Activated CD4-positive, alpha-beta memory T cell treated with anti-CD3 and anti-CD28 coated beads for 36 hours (primary cell): ENCODE measurements at regions of chr13 and their contacts with region 1.

Region 1: DNA sequence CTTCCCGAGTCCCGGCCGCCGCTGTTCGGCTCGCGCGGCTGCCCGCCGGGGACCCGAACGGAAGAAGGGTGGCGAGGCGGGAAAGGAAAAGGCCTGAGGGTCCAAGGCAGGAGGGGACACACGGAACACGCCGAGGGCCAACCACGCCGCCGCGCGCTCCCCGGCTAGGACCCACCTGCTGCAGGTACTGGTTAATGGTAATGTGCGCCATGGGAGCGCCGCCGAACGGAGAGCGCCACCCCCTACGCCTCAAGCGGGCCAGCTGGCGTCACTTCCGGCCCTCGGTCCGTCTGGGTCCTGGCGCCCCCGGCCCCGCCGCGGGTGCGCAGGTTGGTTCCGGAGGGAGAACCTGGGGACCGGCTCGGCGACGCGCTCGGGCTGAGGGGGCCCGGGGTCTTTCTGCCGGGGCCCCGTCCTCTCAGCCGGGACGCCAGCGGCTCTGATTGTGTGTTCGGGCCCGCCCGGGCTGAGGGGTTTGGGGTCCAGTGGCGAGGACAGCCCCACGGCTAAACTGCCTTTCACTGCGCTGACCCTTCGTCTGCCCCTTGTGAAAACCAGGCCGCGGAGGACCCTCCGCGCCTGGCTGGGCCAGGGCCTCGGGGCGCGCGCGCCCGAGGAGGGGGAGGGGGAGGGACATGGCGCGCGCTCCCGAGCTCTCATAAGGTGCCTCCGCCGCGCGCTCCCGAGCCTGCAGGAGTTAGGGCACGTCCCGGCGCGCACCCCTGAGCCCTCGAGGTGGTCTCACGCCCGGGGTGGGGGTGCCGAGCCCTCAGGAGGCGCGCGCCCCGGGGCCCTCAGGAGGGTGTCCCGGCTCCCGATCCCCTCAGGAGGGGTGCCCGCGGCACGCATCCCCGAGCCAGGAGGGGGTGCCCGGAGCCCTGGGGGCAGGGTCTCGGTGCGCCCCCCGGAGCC is at the start of gene PCID2:
- DNase-seq: peak; percentile 92
- H3K4me3 Mint-ChIP-seq: peak within 1 kb of the TSS; percentile 83
- H3K27ac Mint-ChIP-seq: peak within 1 kb of the TSS; percentile 60
- H3K4me1 Mint-ChIP-seq: peaks cover 56% of the 10 kb centered on the region
- H3K27me3 Mint-ChIP-seq: no peaks in the 10 kb centered on the region
- total RNA-seq, gene PCID2: 66.6 to 72.4 TPM

Region 2: DNA sequence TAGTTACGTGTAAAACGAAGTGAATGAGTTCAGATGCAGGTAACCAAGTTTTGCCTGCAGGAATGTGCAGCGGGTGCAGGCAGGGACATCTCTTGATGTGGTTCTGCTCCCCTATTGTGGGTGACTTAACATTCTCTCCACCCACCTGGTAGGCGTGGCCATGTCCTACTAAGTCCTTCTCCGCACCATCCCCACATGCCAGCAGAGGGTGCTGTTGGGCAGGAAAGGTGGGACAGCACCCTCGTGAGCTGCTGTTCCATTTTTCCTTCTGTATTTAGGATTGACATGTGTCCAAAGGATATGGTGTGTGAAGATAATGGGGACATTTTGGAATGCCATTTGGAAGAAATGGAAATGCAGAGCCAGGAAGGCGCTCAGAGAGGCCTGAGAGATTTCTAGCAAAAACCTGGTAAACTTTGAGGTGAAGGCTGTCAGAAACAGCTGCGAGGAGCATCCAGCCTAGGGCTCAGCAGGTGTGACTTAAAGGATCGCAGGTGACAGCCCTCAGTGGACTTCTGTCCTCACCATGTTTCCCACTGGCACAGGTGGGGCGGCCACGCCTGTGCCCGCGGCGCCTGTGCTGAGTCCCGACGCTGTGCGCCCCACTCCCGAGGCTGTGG is 265.9 kb before region 1 on chr13:
- CTCF ChIA-PET with region 1: interaction called, 4 read pairs
- POLR2A ChIA-PET with region 1: no interaction called
- intact Hi-C with region 1: loop called (anchors 5 kb)
- DNase-seq: peak; percentile 97
- H3K4me3 Mint-ChIP-seq: peak overlapping the region; percentile 83
- H3K27ac Mint-ChIP-seq: no peak overlapping the region
- H3K4me1 Mint-ChIP-seq: peaks cover 6% of the 10 kb centered on the region
- H3K27me3 Mint-ChIP-seq: peaks cover 15% of the 10 kb centered on the region

Region 3: GRCh38 chr13:113187263-113187669 is 21.4 kb before region 1 on chr13:
- CTCF ChIA-PET with region 1: interaction called, 5 read pairs
- POLR2A ChIA-PET with region 1: interaction called, 4 read pairs
- intact Hi-C with region 1: loop called (anchors 2 kb)
- DNase-seq: peak; percentile 84
- H3K4me3 Mint-ChIP-seq: peak overlapping the region; percentile 53
- H3K27ac Mint-ChIP-seq: peak overlapping the region; percentile 90
- H3K4me1 Mint-ChIP-seq: peaks cover 40% of the 10 kb centered on the region
- H3K27me3 Mint-ChIP-seq: no peaks in the 10 kb centered on the region

Region 4: DNA sequence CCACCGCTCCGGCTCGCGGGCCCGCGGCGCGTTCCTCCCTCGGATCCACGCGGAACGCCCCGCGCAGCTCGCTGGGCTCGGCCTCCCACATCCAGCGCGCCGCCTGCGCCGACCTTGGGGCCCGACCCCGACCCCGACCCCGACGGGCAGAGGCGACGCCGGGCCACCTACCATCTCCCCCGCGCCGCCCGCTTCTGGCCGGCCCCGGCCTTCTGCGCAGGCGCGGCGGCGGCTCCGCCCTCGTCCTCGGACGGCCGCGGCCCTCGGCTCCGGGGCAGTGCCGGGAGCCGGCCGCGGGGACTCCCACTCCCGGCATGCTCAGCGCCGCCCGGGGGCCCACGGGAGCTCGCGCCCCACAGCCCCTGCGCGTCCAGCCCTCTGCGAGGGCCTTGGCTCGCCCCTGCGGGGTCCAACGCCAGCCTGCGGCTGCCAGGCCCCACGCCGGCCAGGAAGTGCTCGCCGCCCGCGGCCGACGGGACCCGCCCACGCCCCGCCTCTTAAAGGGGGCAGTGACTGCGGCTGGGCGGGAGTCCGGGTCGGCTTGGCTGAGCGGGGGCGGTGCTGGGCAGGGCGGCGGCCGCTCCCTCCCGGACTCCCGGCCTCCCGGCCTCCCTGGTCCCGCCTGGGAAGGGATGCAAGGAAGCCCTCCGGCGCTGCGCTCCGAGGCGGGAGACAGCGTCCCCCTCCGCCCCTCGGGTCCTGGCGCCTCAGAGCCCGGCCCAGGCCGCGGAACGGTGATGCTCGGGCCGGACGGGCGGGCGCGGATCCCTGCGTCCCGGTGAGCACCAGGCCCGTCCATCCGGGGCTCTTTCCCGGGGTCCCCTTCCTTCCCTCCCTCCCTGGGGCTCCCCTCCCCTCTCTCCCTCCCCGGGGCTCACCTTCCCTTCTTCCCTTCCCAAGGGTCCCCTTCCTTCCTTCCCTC is 282.1 kb after region 1 on chr13 and contains the start of gene DCUN1D2:
- CTCF ChIA-PET with region 1: no interaction called
- POLR2A ChIA-PET with region 1: no interaction called
- intact Hi-C with region 1: loop called (anchors 5 kb)
- DNase-seq: peak; percentile 81
- H3K4me3 Mint-ChIP-seq: peak within 1 kb of the TSS; percentile 96
- H3K27ac Mint-ChIP-seq: peak within 1 kb of the TSS; percentile 85
- H3K4me1 Mint-ChIP-seq: peaks cover 59% of the 10 kb centered on the region
- H3K27me3 Mint-ChIP-seq: no peaks in the 10 kb centered on the region
- total RNA-seq, gene DCUN1D2: 14.4 to 15.8 TPM

Region 5: DNA sequence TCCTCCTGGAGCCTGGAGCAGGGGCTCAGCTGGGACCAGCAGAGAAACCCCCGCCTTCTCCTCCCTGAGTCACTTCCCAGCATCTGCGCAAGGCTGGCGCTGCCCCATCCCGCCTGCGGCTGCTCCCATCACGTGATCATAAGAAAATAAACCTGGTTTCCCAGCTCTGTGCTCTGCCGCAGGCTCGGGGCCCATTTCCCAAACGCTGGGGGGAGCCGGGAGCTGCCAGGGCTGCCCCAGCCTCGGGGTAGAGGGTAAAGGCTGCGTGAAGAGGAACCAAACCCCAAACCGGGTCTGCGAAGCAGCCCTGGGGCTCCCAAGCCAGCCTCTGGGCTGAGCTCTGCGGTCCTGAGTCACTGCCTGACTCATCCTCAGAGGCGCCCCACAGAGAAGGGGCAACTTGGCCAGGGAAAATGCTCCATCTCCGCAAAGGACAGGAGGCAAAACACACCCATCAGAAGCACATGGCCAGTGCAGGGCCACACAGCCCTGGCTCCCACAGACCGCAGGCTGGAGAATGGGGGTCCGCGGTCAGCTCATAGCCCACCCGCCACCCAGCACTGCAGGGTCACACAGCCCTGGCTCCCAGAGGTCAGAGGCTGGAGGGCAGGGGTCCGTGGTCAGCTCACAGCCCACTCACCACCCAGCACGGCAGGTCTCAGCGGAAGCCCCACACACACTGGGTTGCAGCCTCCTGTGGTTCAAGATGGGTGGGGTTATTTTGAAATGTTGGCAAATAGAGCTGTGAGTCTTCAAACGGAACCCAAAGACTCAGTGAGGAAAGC is 856.7 kb after region 1 on chr13:
- CTCF ChIA-PET with region 1: no interaction called
- POLR2A ChIA-PET with region 1: no interaction called
- intact Hi-C with region 1: loop called (anchors 5 kb)
- DNase-seq: peak; percentile 90
- H3K4me3 Mint-ChIP-seq: peak overlapping the region; percentile 70
- H3K27ac Mint-ChIP-seq: peak overlapping the region; percentile 96
- H3K4me1 Mint-ChIP-seq: peaks cover 65% of the 10 kb centered on the region
- H3K27me3 Mint-ChIP-seq: no peaks in the 10 kb centered on the region